PC-9 (cell line): ENCODE measurements at regions of chr12 and their contacts with region 1.

Region 1: GRCh38 chr12:122116707-122117535 is 38.4 kb downstream of the MLXIP start:
- DNase-seq: no peak
- H3K4me3 ChIP-seq: no peak overlapping the region
- H3K27ac ChIP-seq: no peak overlapping the region
- H3K4me1 ChIP-seq: peaks cover 8% of the 10 kb centered on the region
- H3K27me3 ChIP-seq: no peaks in the 10 kb centered on the region
- CTCF ChIP-seq: no peak

Region 2: GRCh38 chr12:121839106-121839992 is 277.6 kb before region 1 on chr12:
- CTCF ChIA-PET with region 1: no interaction called
- POLR2A ChIA-PET with region 1: interaction called, 30 read pairs
- intact Hi-C with region 1: no loop called
- DNase-seq: peak; percentile 91 to 100
- H3K4me3 ChIP-seq: peak overlapping the region; percentile 60
- H3K27ac ChIP-seq: no peak overlapping the region
- H3K4me1 ChIP-seq: no peaks in the 10 kb centered on the region; the same call in 1 of the 2 replicates
- H3K27me3 ChIP-seq: no peaks in the 10 kb centered on the region
- CTCF ChIP-seq: no peak; the same call in 1 of the 2 replicates

Region 3: GRCh38 chr12:122072031-122072970 is 44.6 kb before region 1 on chr12:
- CTCF ChIA-PET with region 1: no interaction called
- POLR2A ChIA-PET with region 1: interaction called, 16 read pairs
- intact Hi-C with region 1: no loop called
- DNase-seq: peak; percentile 62 to 66
- H3K4me3 ChIP-seq: no peak overlapping the region
- H3K27ac ChIP-seq: 0 out of 2 replicates have a peak overlapping the region, but pooled peaks have one; percentile 10
- H3K4me1 ChIP-seq: peaks cover 7% of the 10 kb centered on the region; the same call in 1 of the 2 replicates
- H3K27me3 ChIP-seq: no peaks in the 10 kb centered on the region
- CTCF ChIP-seq: peak; percentile 36; the same call in 1 of the 2 replicates

Region 4: DNA sequence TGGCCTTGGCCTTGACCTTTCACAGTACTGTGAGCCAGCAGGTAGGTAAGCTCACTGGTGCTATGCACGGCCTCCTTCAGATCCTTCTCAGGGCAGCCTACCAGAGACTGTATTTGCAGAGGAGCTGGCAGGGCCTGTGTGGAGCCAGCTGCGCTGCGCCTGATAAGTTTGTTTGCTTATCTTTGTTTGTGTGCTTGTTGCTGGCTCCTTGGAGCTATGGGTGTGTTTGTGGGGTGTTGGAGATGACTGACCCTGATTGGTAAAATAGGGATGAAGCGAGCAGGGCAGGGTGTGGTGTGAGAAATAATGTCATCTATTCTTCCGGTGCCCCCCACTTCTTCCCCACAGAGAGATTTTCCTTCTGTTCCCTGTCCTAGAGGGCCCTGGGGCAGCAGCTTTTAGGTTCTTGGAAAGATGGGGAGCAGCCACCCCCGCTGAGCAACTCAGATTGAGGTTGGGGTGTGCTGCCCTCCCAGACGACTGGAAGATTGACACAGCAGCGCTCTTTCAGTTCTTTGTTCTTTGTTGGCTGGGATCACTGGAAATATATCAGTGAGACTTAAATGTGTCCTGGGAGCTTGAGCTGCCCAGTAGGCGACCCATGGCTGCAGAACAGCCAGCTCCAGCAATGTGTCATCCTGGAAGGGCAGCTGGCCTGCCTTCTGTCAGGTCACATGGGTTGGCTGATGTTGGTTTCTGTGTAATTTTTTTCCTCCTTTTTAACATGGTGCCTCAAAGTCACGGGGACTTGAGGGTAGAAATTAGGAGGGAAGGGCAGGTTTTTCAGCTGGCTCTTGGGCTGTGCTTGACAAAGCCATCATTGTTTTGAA is 18.8 kb before region 1 on chr12:
- CTCF ChIA-PET with region 1: no interaction called
- POLR2A ChIA-PET with region 1: interaction called, 15 read pairs
- intact Hi-C with region 1: no loop called
- DNase-seq: peak; percentile 77 to 89
- H3K4me3 ChIP-seq: no peak overlapping the region
- H3K27ac ChIP-seq: peak overlapping the region; percentile 57
- H3K4me1 ChIP-seq: peaks cover 38% of the 10 kb centered on the region
- H3K27me3 ChIP-seq: no peaks in the 10 kb centered on the region
- CTCF ChIP-seq: no peak

Region 5: DNA sequence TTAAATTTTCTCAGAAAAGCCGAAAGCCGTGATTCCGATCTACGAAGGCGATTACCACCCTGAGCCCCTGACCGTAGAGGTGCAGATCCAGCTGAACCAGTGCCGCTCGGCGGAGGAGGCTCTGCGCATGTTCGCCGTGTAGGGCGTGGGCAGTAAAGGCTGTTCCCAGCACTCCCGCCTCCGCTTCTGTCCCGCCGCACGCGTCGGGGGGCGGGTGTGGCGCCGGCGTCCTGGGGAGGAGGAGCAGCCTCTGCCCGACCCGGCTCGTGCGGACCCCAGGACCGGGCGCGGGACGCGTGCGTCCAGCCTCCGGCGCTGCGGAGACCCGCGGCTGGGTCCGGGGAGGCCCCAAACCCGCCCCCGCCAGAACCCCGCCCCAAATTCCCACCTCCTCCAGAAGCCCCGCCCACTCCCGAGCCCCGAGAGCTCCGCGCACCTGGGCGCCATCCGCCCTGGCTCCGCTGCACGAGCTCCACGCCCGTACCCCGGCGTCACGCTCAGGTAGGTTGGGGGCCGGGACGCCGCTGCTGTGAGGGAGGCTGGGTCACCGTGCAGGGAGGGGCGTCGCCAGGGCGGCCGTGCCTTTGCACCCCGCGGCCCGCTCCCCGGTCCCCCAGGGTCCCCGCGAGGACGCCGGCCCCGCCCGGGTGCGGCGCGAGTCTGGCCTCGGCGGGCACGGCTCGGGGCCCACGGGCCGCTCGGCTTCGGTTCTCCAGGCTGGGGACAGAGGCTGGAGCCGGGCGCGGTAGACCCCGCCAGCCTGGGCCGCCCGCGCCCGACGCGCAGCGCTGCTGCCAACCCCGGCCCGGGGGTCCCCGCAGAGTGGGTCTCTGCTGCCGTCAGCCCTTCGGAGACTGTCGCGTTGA is 86.6 kb after region 1 on chr12 and contains the start of gene B3GNT4:
- CTCF ChIA-PET with region 1: no interaction called
- POLR2A ChIA-PET with region 1: no interaction called
- intact Hi-C with region 1: no loop called
- DNase-seq: peak in 1 of 2 experiments; percentile 76
- H3K4me3 ChIP-seq: peak within 1 kb of the TSS; percentile 57
- H3K27ac ChIP-seq: no peak within 1 kb of the TSS
- H3K4me1 ChIP-seq: peaks cover 6% of the 10 kb centered on the region; the same call in 1 of the 2 replicates
- H3K27me3 ChIP-seq: no peaks in the 10 kb centered on the region
- CTCF ChIP-seq: no peak
- total RNA-seq, gene B3GNT4: 2.8 and 3.1 TPM in 2 replicates